ENCODE measurements at regions of chr5 and their contacts with region 1.

Region 1: GRCh38 chr5:88680253-88681132 is 202.5 kb downstream of the MEF2C start:
- DNase-seq: peak in 1 of 2 experiments; percentile 86
- H3K4me3 ChIP-seq: peak overlapping the region; percentile 71
- H3K27ac ChIP-seq: no peak overlapping the region
- H3K4me1 ChIP-seq: peaks cover 10% of the 10 kb centered on the region
- H3K27me3 ChIP-seq: no peaks in the 10 kb centered on the region
- CTCF ChIP-seq: peak; percentile 93

Region 2: GRCh38 chr5:87780831-87781760 is 899.4 kb before region 1 on chr5:
- CTCF ChIA-PET with region 1: interaction called, 3 read pairs
- POLR2A ChIA-PET with region 1: no interaction called
- intact Hi-C with region 1: loop called (anchors 2 kb)
- DNase-seq: peak; percentile 63 to 69
- H3K4me3 ChIP-seq: peak overlapping the region; percentile 36; the same call in 1 of the 2 replicates
- H3K27ac ChIP-seq: no peak overlapping the region
- H3K4me1 ChIP-seq: no peaks in the 10 kb centered on the region
- H3K27me3 ChIP-seq: no peaks in the 10 kb centered on the region
- CTCF ChIP-seq: peak; percentile 90

Region 3: GRCh38 chr5:88190139-88190834 is 490.2 kb before region 1 on chr5:
- CTCF ChIA-PET with region 1: no interaction called
- POLR2A ChIA-PET with region 1: no interaction called
- intact Hi-C with region 1: loop called (anchors 1 kb)
- DNase-seq: peak; percentile 64 to 85
- H3K4me3 ChIP-seq: peak overlapping the region; percentile 57
- H3K27ac ChIP-seq: peak overlapping the region; percentile 80
- H3K4me1 ChIP-seq: peaks cover 12% of the 10 kb centered on the region
- H3K27me3 ChIP-seq: no peaks in the 10 kb centered on the region
- CTCF ChIP-seq: peak; percentile 75

Region 4: GRCh38 chr5:88438011-88438410 is 242.5 kb before region 1 on chr5:
- CTCF ChIA-PET with region 1: no interaction called
- POLR2A ChIA-PET with region 1: no interaction called
- intact Hi-C with region 1: loop called (anchors 1 kb)
- DNase-seq: peak; percentile 72 to 91
- H3K4me3 ChIP-seq: no peak overlapping the region
- H3K27ac ChIP-seq: peak overlapping the region; percentile 63
- H3K4me1 ChIP-seq: peaks cover 29% of the 10 kb centered on the region
- H3K27me3 ChIP-seq: no peaks in the 10 kb centered on the region
- CTCF ChIP-seq: no peak

Region 5: GRCh38 chr5:88502179-88503040 is 178.1 kb before region 1 on chr5:
- CTCF ChIA-PET with region 1: no interaction called
- POLR2A ChIA-PET with region 1: no interaction called
- intact Hi-C with region 1: loop called (anchors 10 kb)
- DNase-seq: no peak
- H3K4me3 ChIP-seq: no peak overlapping the region
- H3K27ac ChIP-seq: no peak overlapping the region
- H3K4me1 ChIP-seq: no peaks in the 10 kb centered on the region
- H3K27me3 ChIP-seq: no peaks in the 10 kb centered on the region
- CTCF ChIP-seq: no peak

Region 6: GRCh38 chr5:88602584-88602983 is 77.9 kb before region 1 on chr5:
- CTCF ChIA-PET with region 1: no interaction called
- POLR2A ChIA-PET with region 1: no interaction called
- intact Hi-C with region 1: loop called (anchors 2 kb)
- DNase-seq: peak in 1 of 2 experiments; percentile 14
- H3K4me3 ChIP-seq: no peak overlapping the region
- H3K27ac ChIP-seq: no peak overlapping the region
- H3K4me1 ChIP-seq: no peaks in the 10 kb centered on the region
- H3K27me3 ChIP-seq: no peaks in the 10 kb centered on the region
- CTCF ChIP-seq: peak; percentile 76

Region 7: GRCh38 chr5:88660947-88661805 is 19.3 kb before region 1 on chr5:
- CTCF ChIA-PET with region 1: interaction called, 3 read pairs
- POLR2A ChIA-PET with region 1: interaction called, 29 read pairs
- intact Hi-C with region 1: no loop called
- DNase-seq: peak; percentile 84 to 97
- H3K4me3 ChIP-seq: peak overlapping the region; percentile 58
- H3K27ac ChIP-seq: peak overlapping the region; percentile 54
- H3K4me1 ChIP-seq: peaks cover 9% of the 10 kb centered on the region
- H3K27me3 ChIP-seq: no peaks in the 10 kb centered on the region
- CTCF ChIP-seq: no peak

Region 8: DNA sequence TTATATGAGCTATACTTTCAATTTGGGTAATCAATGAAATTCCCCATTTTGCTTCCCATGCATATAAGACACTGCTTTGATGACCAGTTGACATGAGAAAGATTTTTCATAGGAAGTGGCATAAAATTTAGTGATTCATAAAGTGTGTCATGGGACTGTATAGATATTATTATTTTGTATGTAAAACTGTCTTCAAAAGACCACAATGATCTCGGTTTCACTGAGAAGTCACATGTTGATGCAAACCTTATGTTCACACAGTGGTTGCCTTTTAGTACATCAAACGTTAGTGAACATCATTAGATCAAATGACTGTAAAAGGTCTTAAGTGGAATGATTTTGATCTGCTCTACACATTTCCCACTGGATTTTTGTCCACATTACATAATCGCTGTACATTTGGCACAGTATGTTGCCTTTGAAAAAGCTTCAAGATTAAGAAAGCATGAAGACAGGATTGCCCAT is 551.7 kb after region 1 on chr5:
- CTCF ChIA-PET with region 1: no interaction called
- POLR2A ChIA-PET with region 1: no interaction called
- intact Hi-C with region 1: no loop called
- DNase-seq: no peak
- H3K4me3 ChIP-seq: no peak overlapping the region
- H3K27ac ChIP-seq: no peak overlapping the region
- H3K4me1 ChIP-seq: no peaks in the 10 kb centered on the region
- H3K27me3 ChIP-seq: no peaks in the 10 kb centered on the region
- CTCF ChIP-seq: no peak